ENCODE measurements at regions of chr2 and their contacts with region 1.

Region 1: GRCh38 chr2:96739633-96740428 is at the start of gene LMAN2L:
- DNase-seq: peak; percentile 88 to 99 (median 96)
- ATAC-seq: peak; percentile 98
- H3K4me3 ChIP-seq: peak within 1 kb of the TSS; percentile 94
- H3K4me3 Mint-ChIP-seq: peak within 1 kb of the TSS; percentile 97
- H3K27ac ChIP-seq: peak within 1 kb of the TSS; percentile 21 to 78
- H3K27ac Mint-ChIP-seq: peak within 1 kb of the TSS; percentile 82
- H3K4me1 ChIP-seq: peaks cover 25% of the 10 kb centered on the region
- H3K4me1 Mint-ChIP-seq: peaks cover 35% of the 10 kb centered on the region
- H3K27me3 ChIP-seq: no peaks in the 10 kb centered on the region
- H3K27me3 Mint-ChIP-seq: no peaks in the 10 kb centered on the region
- CTCF ChIP-seq: no peak
- total RNA-seq, gene LMAN2L: 1.1 to 1.8 TPM

Region 2: DNA sequence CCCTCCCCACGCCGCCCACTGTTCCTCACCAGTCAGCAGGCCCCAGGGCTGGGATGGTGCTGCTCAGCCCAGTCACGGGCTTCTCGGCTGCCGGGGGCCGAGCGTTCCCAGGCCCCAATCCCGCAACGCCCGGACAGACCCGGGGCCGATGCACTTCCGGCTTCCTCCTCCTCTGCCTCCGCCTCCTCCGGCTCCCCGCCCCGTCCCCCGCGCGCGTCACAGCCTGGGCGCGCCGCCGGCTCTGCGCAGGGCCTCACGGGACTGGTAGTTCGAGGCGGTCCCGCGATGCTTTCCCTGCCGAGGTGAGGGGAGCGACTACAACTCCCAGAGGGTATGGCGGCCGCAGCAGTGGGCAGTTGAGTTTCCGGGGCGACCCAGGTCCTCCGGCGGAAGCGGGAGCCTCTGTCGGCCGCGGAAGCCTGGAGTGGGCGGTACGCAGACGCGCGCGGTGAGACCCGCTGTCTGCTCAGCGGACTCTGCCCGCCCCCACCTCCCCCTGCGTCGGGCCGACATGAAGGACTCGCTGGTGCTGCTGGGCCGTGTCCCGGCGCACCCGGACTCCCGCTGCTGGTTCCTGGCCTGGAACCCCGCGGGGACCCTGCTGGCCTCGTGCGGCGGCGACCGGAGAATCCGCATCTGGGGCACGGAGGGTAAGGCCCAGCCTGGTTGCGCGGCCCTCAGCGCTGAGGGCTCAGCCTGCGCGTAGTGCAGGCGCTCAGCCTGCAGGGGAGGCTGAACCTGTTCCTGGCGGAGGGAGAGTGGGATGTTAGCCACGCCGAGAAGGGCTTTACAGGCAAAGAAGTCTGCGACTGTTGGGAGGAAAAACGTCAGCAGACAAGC is 473.8 kb before region 1 on chr2 and contains the starts of genes CIAO1 and TMEM127:
- CTCF ChIA-PET with region 1: no interaction called
- POLR2A ChIA-PET with region 1: no interaction called
- intact Hi-C with region 1: loop called in 1 of 2 experiments (anchors 5 kb)
- DNase-seq: peak; percentile 95 to 99 (median 97)
- ATAC-seq: peak; percentile 92
- H3K4me3 ChIP-seq: peak within 1 kb of the TSS; percentile 86
- H3K4me3 Mint-ChIP-seq: peak within 1 kb of the TSS; percentile 92
- H3K27ac ChIP-seq: peak within 1 kb of the TSS; percentile 85 to 87
- H3K27ac Mint-ChIP-seq: peak within 1 kb of the TSS; percentile 82
- H3K4me1 ChIP-seq: peaks cover 51% of the 10 kb centered on the region
- H3K4me1 Mint-ChIP-seq: peaks cover 43% of the 10 kb centered on the region
- H3K27me3 ChIP-seq: no peaks in the 10 kb centered on the region
- H3K27me3 Mint-ChIP-seq: no peaks in the 10 kb centered on the region
- CTCF ChIP-seq: no peak
- total RNA-seq, gene CIAO1: 55.4 to 55.6 TPM
- total RNA-seq, gene TMEM127: 34.2 to 36.0 TPM

Region 3: GRCh38 chr2:96638144-96639121 is 101.4 kb before region 1 on chr2 and contains the start of gene KANSL3:
- CTCF ChIA-PET with region 1: no interaction called
- POLR2A ChIA-PET with region 1: no interaction called
- intact Hi-C with region 1: loop called (anchors 1 kb)
- DNase-seq: peak; percentile 79 to 95 (median 84)
- ATAC-seq: peak; percentile 85
- H3K4me3 ChIP-seq: peak within 1 kb of the TSS; percentile 98
- H3K4me3 Mint-ChIP-seq: peak within 1 kb of the TSS; percentile 99
- H3K27ac ChIP-seq: peak within 1 kb of the TSS; percentile 69 to 75
- H3K27ac Mint-ChIP-seq: peak within 1 kb of the TSS; percentile 96
- H3K4me1 ChIP-seq: peaks cover 29% of the 10 kb centered on the region
- H3K4me1 Mint-ChIP-seq: peaks cover 45% of the 10 kb centered on the region
- H3K27me3 ChIP-seq: no peaks in the 10 kb centered on the region
- H3K27me3 Mint-ChIP-seq: no peaks in the 10 kb centered on the region
- CTCF ChIP-seq: no peak
- total RNA-seq, gene KANSL3: 54.4 to 61.8 TPM

Region 4: GRCh38 chr2:96656540-96656939 is 83.3 kb before region 1 on chr2:
- CTCF ChIA-PET with region 1: no interaction called
- POLR2A ChIA-PET with region 1: no interaction called
- intact Hi-C with region 1: no loop called
- DNase-seq: no peak
- ATAC-seq: no peak
- H3K4me3 ChIP-seq: no peak overlapping the region
- H3K4me3 Mint-ChIP-seq: no peak overlapping the region
- H3K27ac ChIP-seq: no peak overlapping the region
- H3K27ac Mint-ChIP-seq: no peak overlapping the region
- H3K4me1 ChIP-seq: peaks cover 2% of the 10 kb centered on the region
- H3K4me1 Mint-ChIP-seq: no peaks in the 10 kb centered on the region
- H3K27me3 ChIP-seq: no peaks in the 10 kb centered on the region
- H3K27me3 Mint-ChIP-seq: peaks cover 5% of the 10 kb centered on the region
- CTCF ChIP-seq: no peak

Region 5: DNA sequence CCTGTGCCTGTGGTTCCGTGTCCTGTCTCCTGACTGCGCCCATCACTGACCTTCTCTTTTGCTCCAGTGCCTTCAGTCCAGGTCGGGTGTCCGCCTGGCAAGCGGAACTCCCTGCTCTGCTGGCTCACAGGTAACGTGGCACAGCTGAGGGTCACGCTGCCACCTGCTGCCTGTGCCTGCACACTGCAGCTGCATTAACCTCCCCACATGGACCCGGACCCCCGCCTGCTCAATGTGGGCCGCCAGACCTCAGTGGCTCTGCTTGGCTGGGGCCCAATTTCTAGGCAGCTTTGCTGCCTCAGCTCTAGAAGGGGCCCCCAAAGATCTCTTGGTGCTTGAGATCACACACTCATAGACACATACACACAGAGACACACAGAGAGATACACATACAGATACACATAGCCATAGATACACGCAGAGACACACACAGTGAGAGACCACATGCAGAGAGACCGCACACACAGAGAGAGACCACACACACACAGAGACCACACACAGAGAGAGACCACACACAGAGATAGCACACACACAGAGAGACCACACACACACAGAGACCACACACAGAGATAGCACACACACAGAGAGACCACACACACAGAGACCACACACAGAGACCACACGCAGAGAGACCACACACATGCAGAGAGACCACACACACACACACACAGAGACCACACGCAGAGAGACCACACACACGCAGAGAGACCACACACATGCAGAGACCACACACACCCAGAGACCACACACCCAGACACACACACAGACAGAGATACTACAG is 61.4 kb after region 1 on chr2:
- CTCF ChIA-PET with region 1: no interaction called
- POLR2A ChIA-PET with region 1: no interaction called
- intact Hi-C with region 1: loop called (anchors 5 kb)
- DNase-seq: peak; percentile 60 to 83 (median 67)
- ATAC-seq: peak; percentile 99
- H3K4me3 ChIP-seq: no peak overlapping the region
- H3K4me3 Mint-ChIP-seq: no peak overlapping the region
- H3K27ac ChIP-seq: no peak overlapping the region
- H3K27ac Mint-ChIP-seq: no peak overlapping the region
- H3K4me1 ChIP-seq: peaks cover 27% of the 10 kb centered on the region
- H3K4me1 Mint-ChIP-seq: peaks cover 7% of the 10 kb centered on the region
- H3K27me3 ChIP-seq: no peaks in the 10 kb centered on the region
- H3K27me3 Mint-ChIP-seq: no peaks in the 10 kb centered on the region
- CTCF ChIP-seq: peak; percentile 76

Region 6: DNA sequence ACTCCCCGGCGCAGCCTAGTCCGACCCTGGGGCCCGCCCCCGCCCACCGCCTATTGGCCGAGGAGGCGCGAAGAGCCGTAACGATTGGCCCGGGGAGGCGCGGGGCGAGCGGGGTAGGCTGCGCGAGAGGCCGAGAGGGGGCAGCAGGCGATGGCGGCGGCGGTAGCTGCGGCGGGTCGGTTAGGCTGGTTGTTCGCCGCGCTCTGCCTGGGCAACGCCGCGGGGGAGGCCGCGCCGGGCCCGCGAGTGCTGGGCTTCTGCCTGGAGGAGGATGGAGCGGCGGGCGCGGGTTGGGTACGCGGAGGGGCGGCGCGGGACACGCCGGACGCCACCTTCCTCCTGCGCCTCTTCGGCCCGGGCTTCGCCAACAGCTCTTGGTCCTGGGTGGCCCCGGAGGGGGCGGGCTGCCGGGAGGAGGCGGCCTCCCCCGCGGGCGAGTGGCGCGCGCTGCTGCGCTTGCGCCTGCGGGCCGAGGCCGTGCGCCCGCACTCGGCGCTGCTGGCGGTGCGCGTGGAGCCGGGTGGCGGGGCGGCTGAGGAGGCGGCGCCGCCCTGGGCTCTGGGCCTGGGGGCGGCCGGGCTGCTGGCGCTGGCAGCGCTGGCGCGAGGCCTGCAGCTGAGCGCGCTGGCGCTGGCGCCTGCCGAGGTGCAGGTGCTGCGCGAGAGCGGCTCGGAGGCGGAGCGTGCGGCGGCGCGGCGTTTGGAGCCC is 76.5 kb after region 1 on chr2 and contains the start of gene CNNM3:
- CTCF ChIA-PET with region 1: no interaction called
- POLR2A ChIA-PET with region 1: no interaction called
- intact Hi-C with region 1: loop called in 1 of 2 experiments (anchors 1 kb)
- DNase-seq: peak; percentile 90 to 98 (median 96)
- ATAC-seq: peak; percentile 91
- H3K4me3 ChIP-seq: peak within 1 kb of the TSS; percentile 77
- H3K4me3 Mint-ChIP-seq: peak within 1 kb of the TSS; percentile 94
- H3K27ac ChIP-seq: peak within 1 kb of the TSS; percentile 52 to 60
- H3K27ac Mint-ChIP-seq: peak within 1 kb of the TSS; percentile 88
- H3K4me1 ChIP-seq: peaks cover 49% of the 10 kb centered on the region
- H3K4me1 Mint-ChIP-seq: peaks cover 62% of the 10 kb centered on the region
- H3K27me3 ChIP-seq: no peaks in the 10 kb centered on the region
- H3K27me3 Mint-ChIP-seq: no peaks in the 10 kb centered on the region
- CTCF ChIP-seq: peak; percentile 65
- total RNA-seq, gene CNNM3: 48.7 to 53.5 TPM